HCT116 (cell line): ENCODE measurements at regions of chr10 and their contacts with region 1.

Region 1: GRCh38 chr10:125868372-125868975 is 12.6 kb downstream of the DHX32 start:
- DNase-seq: peak; percentile 59
- ATAC-seq: peak; percentile 87
- H3K4me3 ChIP-seq: no peak overlapping the region
- H3K27ac ChIP-seq: no peak overlapping the region
- H3K4me1 ChIP-seq: no peaks in the 10 kb centered on the region
- H3K27me3 ChIP-seq: no peaks in the 10 kb centered on the region
- CTCF ChIP-seq: peak; percentile 85 to 100 (median 94); a peak in 5 of 6 replicates
- POLR2A ChIP-seq: no peak
- RAD21 ChIP-seq: peak; percentile 97

Region 2: DNA sequence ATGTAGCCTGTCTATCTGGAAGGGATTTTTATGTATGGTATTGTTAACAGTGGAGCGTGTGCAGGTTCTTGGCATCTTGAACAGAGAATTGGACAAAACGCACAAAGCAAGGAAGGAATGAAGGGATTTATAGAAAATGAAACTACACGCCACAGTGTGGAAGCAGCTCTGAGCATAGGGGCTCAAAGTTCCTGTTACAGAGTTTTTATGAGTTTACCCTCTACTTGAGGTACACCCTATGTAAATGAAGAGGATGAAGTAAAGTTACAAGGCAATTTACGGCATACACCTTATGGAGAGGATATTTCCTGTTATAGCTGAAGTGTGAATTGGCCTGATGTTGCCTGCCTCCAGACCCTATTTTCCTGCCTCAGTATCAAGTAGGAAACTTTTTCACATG is 61.1 kb after region 1 on chr10:
- CTCF ChIA-PET with region 1: interaction called, 8 read pairs
- POLR2A ChIA-PET with region 1: no interaction called
- RAD21 ChIA-PET with region 1: interaction called in 1 of 2 experiments, 3 read pairs
- intact Hi-C with region 1: loop called (anchors 5 kb)
- DNase-seq: no peak
- ATAC-seq: no peak
- H3K4me3 ChIP-seq: no peak overlapping the region
- H3K27ac ChIP-seq: no peak overlapping the region
- H3K4me1 ChIP-seq: peaks cover 2 to 10% of the 10 kb centered on the region in 2 experiments; a peak in 3 of 4 replicates
- H3K27me3 ChIP-seq: no peaks in the 10 kb centered on the region
- CTCF ChIP-seq: no peak
- POLR2A ChIP-seq: no peak
- RAD21 ChIP-seq: no peak

Region 3: GRCh38 chr10:126097558-126098225 is 229.2 kb after region 1 on chr10:
- CTCF ChIA-PET with region 1: no interaction called
- POLR2A ChIA-PET with region 1: no interaction called
- RAD21 ChIA-PET with region 1: no interaction called
- intact Hi-C with region 1: loop called (anchors 5 kb)
- DNase-seq: no peak
- ATAC-seq: peak; percentile 73
- H3K4me3 ChIP-seq: no peak overlapping the region
- H3K27ac ChIP-seq: no peak overlapping the region
- H3K4me1 ChIP-seq: no peaks in the 10 kb centered on the region
- H3K27me3 ChIP-seq: peaks cover 55% of the 10 kb centered on the region
- CTCF ChIP-seq: peak; percentile 16 to 55 (median 52); a peak in 5 of 6 replicates
- POLR2A ChIP-seq: no peak
- RAD21 ChIP-seq: peak; percentile 40; the same call in 1 of the 2 replicates

Region 4: DNA sequence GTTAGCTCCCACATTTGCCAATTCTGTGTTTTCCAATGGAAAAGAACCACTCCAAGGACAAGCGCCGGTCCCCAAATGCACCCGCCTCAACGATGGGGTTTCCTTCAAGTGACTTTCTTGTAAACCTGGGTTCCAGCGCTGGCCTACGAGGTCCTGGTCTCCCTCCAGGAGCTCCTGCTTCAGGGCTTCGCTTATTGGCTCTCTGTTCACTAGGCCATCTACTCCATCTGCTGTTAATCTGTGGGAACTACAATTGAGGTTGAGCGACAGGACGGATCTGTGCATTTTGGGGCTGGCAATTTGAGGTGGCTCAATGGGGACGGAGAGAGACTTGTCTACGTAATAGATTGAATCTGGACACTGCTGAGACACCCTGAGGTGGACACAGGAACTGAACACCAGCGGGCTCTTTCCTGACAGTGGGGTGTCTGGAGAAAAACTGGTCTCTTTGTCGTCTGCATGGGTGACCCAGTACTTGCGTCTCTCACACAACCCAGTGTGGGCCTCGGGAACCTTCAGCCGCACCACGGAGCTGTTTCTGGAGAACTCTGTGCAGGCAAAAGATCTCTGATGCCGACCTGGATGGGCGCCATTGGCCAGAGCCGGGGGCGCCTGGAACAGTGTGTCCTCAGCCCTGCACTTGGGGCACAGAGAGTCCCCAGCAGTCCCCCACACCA is 635.7 kb after region 1 on chr10:
- CTCF ChIA-PET with region 1: no interaction called
- POLR2A ChIA-PET with region 1: no interaction called
- RAD21 ChIA-PET with region 1: no interaction called
- intact Hi-C with region 1: loop called (anchors 1 kb)
- DNase-seq: peak; percentile 68
- ATAC-seq: peak; percentile 96
- H3K4me3 ChIP-seq: no peak overlapping the region
- H3K27ac ChIP-seq: no peak overlapping the region
- H3K4me1 ChIP-seq: no peaks in the 10 kb centered on the region
- H3K27me3 ChIP-seq: peaks cover 25% of the 10 kb centered on the region; the same call in 1 of the 2 replicates
- CTCF ChIP-seq: peak; percentile 74 to 83 (median 75)
- POLR2A ChIP-seq: no peak
- RAD21 ChIP-seq: peak; percentile 91

Region 5: DNA sequence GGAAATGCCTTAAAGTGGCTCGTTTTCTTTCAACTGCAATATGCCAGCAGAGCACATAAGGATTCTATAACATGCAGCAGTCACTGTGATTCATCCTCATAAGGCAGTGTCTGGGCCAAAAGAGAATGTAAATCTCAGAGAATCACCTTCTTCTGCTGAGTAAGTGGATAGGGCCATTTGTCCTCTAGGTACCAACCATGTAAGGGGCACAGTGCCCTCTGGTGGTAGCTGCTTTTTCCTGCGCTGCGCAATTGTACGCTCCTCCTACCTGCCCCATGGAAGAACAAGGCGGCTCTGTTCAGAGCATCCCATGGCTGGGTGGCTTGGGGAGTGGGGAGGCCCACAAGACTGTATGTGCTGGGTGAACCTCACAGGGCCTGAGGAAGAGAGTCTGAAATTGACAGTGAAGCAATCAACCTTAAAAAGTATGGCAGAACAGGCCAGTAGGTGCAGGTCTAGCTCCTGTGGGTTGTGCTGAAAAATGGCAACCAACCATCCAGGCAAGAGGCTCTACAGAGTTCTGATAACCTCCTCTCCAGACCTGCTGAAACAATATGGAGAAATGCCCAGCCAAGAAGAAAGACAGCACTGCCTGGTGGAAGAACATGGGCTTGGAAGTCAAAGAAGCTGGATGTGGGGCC is 880.7 kb after region 1 on chr10:
- CTCF ChIA-PET with region 1: no interaction called
- POLR2A ChIA-PET with region 1: no interaction called
- RAD21 ChIA-PET with region 1: no interaction called
- intact Hi-C with region 1: loop called (anchors 2 kb)
- DNase-seq: peak; percentile 70
- ATAC-seq: peak; percentile 100
- H3K4me3 ChIP-seq: no peak overlapping the region
- H3K27ac ChIP-seq: no peak overlapping the region
- H3K4me1 ChIP-seq: no peaks in the 10 kb centered on the region
- H3K27me3 ChIP-seq: peaks cover 5% of the 10 kb centered on the region; the same call in 1 of the 2 replicates
- CTCF ChIP-seq: peak; percentile 71 to 98 (median 96)
- POLR2A ChIP-seq: no peak
- RAD21 ChIP-seq: peak; percentile 83